AG04449 (cell line): ENCODE measurements at regions of chr18 and their contacts with region 1.

Region 1: DNA sequence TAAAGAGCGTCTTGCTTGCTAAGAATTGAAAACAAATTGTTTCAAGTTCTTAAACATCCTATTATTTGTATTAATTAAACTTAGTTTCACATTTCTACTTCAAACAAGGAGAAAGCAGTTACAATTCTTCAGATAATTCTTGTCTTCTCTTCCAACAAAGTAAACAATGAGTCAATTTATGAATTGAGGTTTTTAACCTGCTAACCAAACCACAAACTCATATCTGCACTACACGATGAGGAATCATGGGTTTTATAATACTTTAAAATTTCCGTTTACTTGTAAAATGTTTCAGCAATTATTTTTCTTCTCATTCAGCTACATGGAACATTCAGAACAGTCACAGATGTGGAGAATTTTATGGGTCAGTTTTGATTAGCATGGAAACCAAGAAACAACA is 114.2 kb downstream of the SPIRE1 start:
- DNase-seq: no peak
- H3K4me3 ChIP-seq: no peak overlapping the region
- CTCF ChIP-seq: no peak

Region 2: GRCh38 chr18:12645254-12646203 is 101.8 kb after region 1 on chr18:
- CTCF ChIA-PET with region 1: interaction called, 14 read pairs
- POLR2A ChIA-PET with region 1: no interaction called
- DNase-seq: no peak
- H3K4me3 ChIP-seq: no peak overlapping the region
- CTCF ChIP-seq: no peak